Activated CD8-positive, alpha-beta T cell treated with anti-CD3 and anti-CD28 coated beads, Interleukin-2, amount 10 ng/mL, durations not matched to agents 7 days and 5 days (primary cell): ENCODE measurements at regions of chr10 and their contacts with region 1.

Region 1: GRCh38 chr10:23540401-23541030 is 101.6 kb downstream of the OTUD1 start:
- DNase-seq: peak; percentile 28
- ATAC-seq: no peak
- H3K4me3 Mint-ChIP-seq: no peak overlapping the region
- H3K27ac Mint-ChIP-seq: peak overlapping the region; percentile 78
- H3K4me1 Mint-ChIP-seq: peaks cover 39% of the 10 kb centered on the region
- H3K27me3 Mint-ChIP-seq: no peaks in the 10 kb centered on the region

Region 2: DNA sequence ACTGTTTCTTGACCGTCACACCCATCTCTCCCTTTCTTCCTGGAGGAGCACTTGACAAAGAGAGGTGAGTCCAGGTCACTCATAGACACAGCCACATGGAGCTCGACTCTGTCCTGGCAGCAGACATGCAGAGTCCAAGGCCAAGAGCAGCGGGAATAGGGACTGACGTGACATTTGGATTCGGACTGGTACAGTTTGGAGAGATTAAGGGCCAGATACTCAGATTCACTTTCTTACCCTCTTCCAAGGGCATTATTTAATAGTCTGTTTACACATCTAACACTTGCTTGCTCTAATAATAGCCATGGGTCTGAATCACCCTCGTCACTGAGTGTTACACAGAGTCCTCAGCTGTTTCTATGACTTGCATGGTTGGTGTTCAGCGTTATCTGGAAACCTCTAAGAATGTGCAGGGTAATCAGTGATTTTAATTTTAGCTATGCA is 140.8 kb before region 1 on chr10:
- CTCF ChIA-PET with region 1: no interaction called
- POLR2A ChIA-PET with region 1: no interaction called
- DNase-seq: no peak
- ATAC-seq: no peak
- H3K4me3 Mint-ChIP-seq: no peak overlapping the region
- H3K27ac Mint-ChIP-seq: no peak overlapping the region
- H3K4me1 Mint-ChIP-seq: no peaks in the 10 kb centered on the region
- H3K27me3 Mint-ChIP-seq: no peaks in the 10 kb centered on the region

Region 3: GRCh38 chr10:23499372-23500132 is 41.0 kb before region 1 on chr10:
- CTCF ChIA-PET with region 1: no interaction called
- POLR2A ChIA-PET with region 1: no interaction called
- DNase-seq: no peak
- ATAC-seq: no peak
- H3K4me3 Mint-ChIP-seq: no peak overlapping the region
- H3K27ac Mint-ChIP-seq: no peak overlapping the region
- H3K4me1 Mint-ChIP-seq: no peaks in the 10 kb centered on the region
- H3K27me3 Mint-ChIP-seq: peaks cover 4% of the 10 kb centered on the region

Region 4: GRCh38 chr10:23525406-23525805 is 15.1 kb before region 1 on chr10:
- CTCF ChIA-PET with region 1: interaction called, 27 read pairs
- POLR2A ChIA-PET with region 1: no interaction called
- DNase-seq: no peak
- ATAC-seq: no peak
- H3K4me3 Mint-ChIP-seq: no peak overlapping the region
- H3K27ac Mint-ChIP-seq: no peak overlapping the region
- H3K4me1 Mint-ChIP-seq: no peaks in the 10 kb centered on the region
- H3K27me3 Mint-ChIP-seq: peaks cover 3% of the 10 kb centered on the region